H1 (cell line): ENCODE measurements at regions of chr20 and their contacts with region 1.

Region 1: GRCh38 chr20:13441388-13441787 is 197.3 kb downstream of the TASP1 start:
- DNase-seq: no peak
- H3K4me3 ChIP-seq: no peak overlapping the region
- H3K27ac ChIP-seq: no peak overlapping the region
- H3K4me1 ChIP-seq: no peaks in the 10 kb centered on the region
- H3K27me3 ChIP-seq: no peaks in the 10 kb centered on the region
- CTCF ChIP-seq: no peak
- EP300 ChIP-seq: no peak
- POLR2A ChIP-seq: no peak
- RAD21 ChIP-seq: no peak

Region 2: DNA sequence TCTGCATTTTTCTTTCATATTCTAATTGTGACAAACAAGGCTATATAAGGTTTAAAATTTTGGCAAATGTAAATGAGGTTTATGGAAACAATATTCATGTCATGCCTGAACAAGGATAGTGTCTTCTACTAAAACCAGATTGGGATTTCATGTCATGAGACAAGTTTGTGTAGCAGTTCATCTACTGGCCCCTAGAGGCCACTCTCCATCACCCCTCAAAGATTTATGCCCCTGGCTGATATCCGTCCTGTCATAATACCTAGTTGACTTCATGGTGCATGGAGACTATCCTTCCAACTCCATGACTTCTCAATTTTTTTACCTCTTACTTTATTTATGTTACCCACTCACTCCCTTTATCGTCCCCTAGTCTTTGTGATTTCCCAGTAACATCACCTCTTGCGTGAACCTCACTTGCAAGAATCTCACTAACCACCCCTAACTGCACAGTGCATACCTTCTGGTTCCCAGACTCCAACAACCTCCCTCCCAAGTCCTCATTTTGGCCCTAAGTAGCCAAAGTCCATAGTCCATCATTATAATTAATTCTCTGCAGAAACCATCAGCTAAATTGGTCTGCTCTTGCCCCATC is 17.6 kb after region 1 on chr20:
- CTCF ChIA-PET with region 1: interaction called, 20 read pairs
- POLR2A ChIA-PET with region 1: no interaction called
- DNase-seq: no peak
- H3K4me3 ChIP-seq: no peak overlapping the region
- H3K27ac ChIP-seq: no peak overlapping the region
- H3K4me1 ChIP-seq: peaks cover 0 to 3% (median 0%) of the 10 kb centered on the region in 4 experiments; a peak in 1 of 7 replicates
- H3K27me3 ChIP-seq: no peaks in the 10 kb centered on the region
- CTCF ChIP-seq: peak; percentile 14 to 83 (median 56)
- EP300 ChIP-seq: no peak
- POLR2A ChIP-seq: no peak
- RAD21 ChIP-seq: peak; percentile 66 to 73